Heart right ventricle (tissue), 16 donors: ENCODE measurements at regions of chr3 and their contacts with region 1.

Region 1: DNA sequence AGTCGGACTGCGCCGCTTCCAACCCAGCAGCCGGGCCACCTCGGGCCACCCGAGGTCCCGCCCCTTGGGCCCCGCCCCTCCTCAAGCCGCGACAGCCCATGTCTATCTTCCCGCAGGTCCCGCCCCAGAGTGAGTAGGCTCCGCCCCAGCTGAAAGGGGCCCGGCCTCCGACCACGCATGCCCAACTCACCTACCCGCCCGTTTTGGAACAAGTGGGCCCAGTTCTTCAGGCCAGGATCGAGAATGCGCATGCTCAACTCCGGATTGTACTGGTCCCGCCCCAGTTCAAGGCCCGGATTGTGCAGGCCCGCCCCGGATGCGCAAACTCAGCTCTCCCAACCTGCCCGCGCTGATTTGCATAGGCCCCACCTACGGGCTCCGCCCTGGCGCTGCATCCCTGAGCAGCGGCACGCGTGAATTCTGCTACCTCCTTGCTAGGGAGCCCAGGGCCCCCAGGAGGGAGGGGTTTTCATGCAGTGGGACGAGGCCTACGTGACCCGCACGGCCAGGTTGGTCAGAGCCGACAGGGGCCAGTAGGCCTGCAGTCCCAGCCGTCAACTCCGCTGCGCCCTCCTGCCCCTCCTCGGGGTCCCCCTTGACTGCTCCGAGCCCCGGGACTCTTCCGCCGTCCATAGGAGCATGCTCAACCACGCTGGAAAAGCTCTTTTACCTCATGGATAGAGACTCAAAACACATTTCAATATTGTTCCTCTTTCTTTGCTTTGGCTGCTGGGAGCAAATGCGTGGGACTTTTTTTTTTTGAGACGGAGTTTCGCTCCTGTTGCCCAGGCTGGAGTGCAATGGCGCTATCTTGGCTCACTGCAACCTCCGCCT is at the start of gene PFKFB4:
- DNase-seq: peak; percentile 99
- ATAC-seq: peak; percentile 93 to 95 (median 94)
- H3K4me3 ChIP-seq: peak within 1 kb of the TSS in 9 of 10 donors; percentile 38 to 72 (median 62)
- H3K27ac ChIP-seq: peak within 1 kb of the TSS in 9 of 10 donors; percentile 52 to 86 (median 63)
- H3K4me1 ChIP-seq: peaks cover 9 to 79% (median 29%) of the 10 kb centered on the region in 9 donors
- H3K27me3 ChIP-seq: no peaks in the 10 kb centered on the region
- CTCF ChIP-seq: peak in 2 of 9 donors; percentile 17 to 18
- total RNA-seq, gene PFKFB4: 0.40 to 7.7 (median 1.5) TPM

Region 2: GRCh38 chr3:48446425-48447193 is 110.4 kb before region 1 on chr3 and contains the start of gene ATRIP:
- intact Hi-C with region 1: loop called in 1 of 10 experiments (anchors 5 kb)
- DNase-seq: peak; percentile 88 to 92
- ATAC-seq: peak; percentile 98 to 99 (median 99)
- H3K4me3 ChIP-seq: peak within 1 kb of the TSS; percentile 63 to 91 (median 78)
- H3K27ac ChIP-seq: peak within 1 kb of the TSS; percentile 52 to 94 (median 90)
- H3K4me1 ChIP-seq: peaks cover 4 to 34% (median 25%) of the 10 kb centered on the region in 9 donors
- H3K27me3 ChIP-seq: no peaks in the 10 kb centered on the region
- CTCF ChIP-seq: peak in 1 of 9 donors; percentile 42
- total RNA-seq, gene ATRIP: 2.2 to 5.4 (median 3.8) TPM

Region 3: DNA sequence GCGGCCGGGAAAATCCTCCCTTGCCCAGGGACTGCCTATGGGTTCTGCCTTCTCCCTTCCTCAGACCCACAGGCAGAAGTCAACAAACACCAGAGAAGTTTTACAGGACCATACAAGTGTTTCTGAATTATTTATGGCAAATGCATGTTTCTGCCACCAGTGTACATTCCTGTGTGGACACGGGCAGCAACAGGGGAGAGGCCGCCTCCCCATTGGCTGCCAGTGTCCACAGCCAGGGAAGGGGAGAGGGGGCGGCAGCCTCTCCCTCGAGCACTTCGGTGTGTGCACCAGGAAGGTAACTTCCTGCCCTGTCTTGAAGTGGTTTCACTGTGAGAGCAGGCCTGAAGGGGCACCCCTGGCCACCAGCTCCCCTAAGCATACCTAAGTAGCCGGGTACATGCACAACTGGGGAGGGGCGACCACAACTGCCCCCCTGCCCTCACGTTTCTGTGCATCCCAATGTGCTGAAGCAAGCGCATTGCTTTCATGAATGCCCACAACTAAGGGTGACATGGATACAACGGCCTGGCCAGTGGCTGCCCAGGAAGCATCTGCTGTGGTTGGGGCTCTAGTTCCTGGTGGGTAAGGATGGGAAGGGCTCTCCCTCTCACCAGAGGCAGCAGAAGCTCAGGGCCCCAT is 38.3 kb before region 1 on chr3:
- intact Hi-C with region 1: no loop called
- DNase-seq: no peak
- ATAC-seq: no peak
- H3K4me3 ChIP-seq: no peak overlapping the region
- H3K27ac ChIP-seq: no peak overlapping the region
- H3K4me1 ChIP-seq: peaks cover 0 to 4% (median 0%) of the 10 kb centered on the region in 9 donors
- H3K27me3 ChIP-seq: no peaks in the 10 kb centered on the region
- CTCF ChIP-seq: no peak

Region 4: GRCh38 chr3:48609088-48610005 is 52.3 kb after region 1 on chr3 and contains the start of gene UQCRC1:
- intact Hi-C with region 1: loop called in 2 of 10 experiments (anchors 5 kb)
- DNase-seq: peak; percentile 91 to 94
- ATAC-seq: peak; percentile 99 to 100 (median 100)
- H3K4me3 ChIP-seq: peak within 1 kb of the TSS; percentile 76 to 98 (median 84)
- H3K27ac ChIP-seq: peak within 1 kb of the TSS; percentile 85 to 99 (median 95)
- H3K4me1 ChIP-seq: peaks cover 10 to 48% (median 25%) of the 10 kb centered on the region in 9 donors
- H3K27me3 ChIP-seq: no peaks in the 10 kb centered on the region
- CTCF ChIP-seq: peak; percentile 59 to 90 (median 80)
- total RNA-seq, gene UQCRC1: 723 to 1,173 (median 1,035) TPM

Region 5: DNA sequence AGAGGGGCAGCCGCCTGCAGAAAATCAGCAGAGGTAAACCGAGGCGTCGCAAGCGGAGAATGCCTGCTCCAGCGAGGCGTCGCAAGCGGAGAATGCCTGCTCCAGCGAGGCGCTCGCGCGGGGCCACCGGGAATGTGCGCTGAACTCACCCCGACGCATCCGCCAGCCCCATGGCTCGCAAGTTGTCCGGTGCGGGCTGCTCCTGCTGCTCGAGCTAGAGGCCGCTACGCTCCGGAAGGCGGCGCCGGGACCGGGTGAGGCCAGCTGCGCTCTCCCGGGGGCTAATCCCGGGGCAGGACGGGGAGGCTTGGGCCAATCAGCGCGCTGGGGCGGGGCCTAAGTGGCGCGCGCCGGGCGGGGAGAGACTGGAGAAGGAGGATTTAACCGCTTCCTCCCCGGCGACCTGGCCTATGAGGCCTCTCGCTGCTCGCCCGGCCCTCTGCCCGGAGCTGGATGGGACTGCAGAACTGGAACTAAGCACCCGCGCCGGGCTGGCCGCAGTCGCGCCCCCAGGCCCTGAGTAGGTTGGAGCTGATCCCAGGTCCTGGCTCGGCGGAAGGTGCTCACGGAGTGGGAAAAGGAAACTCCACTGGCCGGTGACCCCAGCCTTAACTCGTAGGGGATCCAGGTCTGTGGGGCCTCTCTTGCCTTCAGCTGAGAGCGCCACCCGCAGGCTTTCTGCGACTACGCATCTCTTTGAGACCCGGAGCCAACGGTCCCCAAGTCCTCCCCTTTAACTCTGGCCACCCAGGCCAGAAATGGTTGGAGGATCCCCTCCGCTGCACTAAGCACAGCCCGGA is 78.4 kb after region 1 on chr3 and contains the start of gene SLC26A6:
- intact Hi-C with region 1: loop called in 2 of 10 experiments (anchors 2 kb)
- DNase-seq: peak; percentile 97 to 98
- ATAC-seq: peak; percentile 98 to 99 (median 99)
- H3K4me3 ChIP-seq: peak within 1 kb of the TSS; percentile 73 to 99 (median 88)
- H3K27ac ChIP-seq: peak within 1 kb of the TSS; percentile 55 to 91 (median 88)
- H3K4me1 ChIP-seq: peaks cover 5 to 28% (median 21%) of the 10 kb centered on the region in 9 donors
- H3K27me3 ChIP-seq: no peaks in the 10 kb centered on the region
- CTCF ChIP-seq: peak in 8 of 9 donors; percentile 38 to 69 (median 45)
- total RNA-seq, gene SLC26A6: 5.2 to 17.7 (median 10.2) TPM